Activated CD8-positive, alpha-beta T cell treated with anti-CD3 and anti-CD28 coated beads, Interleukin-2, amount 10 ng/mL, durations not matched to agents 7 days and 5 days (primary cell): ENCODE measurements at regions of chr7 and their contacts with region 1.

Region 1: DNA sequence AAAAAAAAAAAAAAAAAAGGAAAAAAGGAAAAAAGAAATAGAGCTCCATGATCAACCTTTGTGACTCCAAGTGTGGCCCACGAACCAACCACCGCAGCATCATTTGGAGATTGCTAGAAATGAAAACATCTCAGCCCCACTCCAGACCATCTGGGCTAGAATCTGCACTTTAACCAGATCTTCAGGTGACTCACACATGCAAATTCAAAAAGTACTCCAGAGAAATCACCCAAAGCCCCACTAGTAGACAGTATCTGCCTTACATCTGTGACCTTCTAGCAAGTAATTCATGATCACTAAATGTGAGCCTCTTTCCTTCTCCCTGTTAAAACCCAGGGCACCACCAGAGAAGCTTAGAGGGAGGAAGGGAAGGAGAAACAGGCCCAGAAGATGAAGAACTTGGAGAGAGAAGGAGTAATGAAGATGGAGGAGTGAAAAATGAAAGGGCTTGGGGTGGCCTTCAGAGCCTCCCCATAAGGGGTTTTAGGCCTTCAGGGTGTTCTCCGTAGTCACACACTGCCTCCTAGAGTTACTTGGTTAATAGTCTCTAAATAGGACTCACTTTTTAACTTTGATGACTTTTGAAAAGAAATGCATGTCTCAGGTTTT is 94.0 kb downstream of the SLC37A3 start:
- DNase-seq: peak; percentile 62
- ATAC-seq: peak; percentile 93
- H3K4me3 Mint-ChIP-seq: no peak overlapping the region
- H3K27ac Mint-ChIP-seq: peak overlapping the region; percentile 47
- H3K4me1 Mint-ChIP-seq: peaks cover 4% of the 10 kb centered on the region
- H3K27me3 Mint-ChIP-seq: peaks cover 1% of the 10 kb centered on the region

Region 2: GRCh38 chr7:140175221-140176121 is 128.8 kb before region 1 on chr7:
- CTCF ChIA-PET with region 1: interaction called, 11 read pairs
- POLR2A ChIA-PET with region 1: interaction called, 7 read pairs
- DNase-seq: peak; percentile 93
- ATAC-seq: peak; percentile 57
- H3K4me3 Mint-ChIP-seq: peak overlapping the region; percentile 82
- H3K27ac Mint-ChIP-seq: peak overlapping the region; percentile 87
- H3K4me1 Mint-ChIP-seq: peaks cover 22% of the 10 kb centered on the region
- H3K27me3 Mint-ChIP-seq: peaks cover 21% of the 10 kb centered on the region

Region 3: GRCh38 chr7:140230861-140231770 is 73.2 kb before region 1 on chr7:
- CTCF ChIA-PET with region 1: interaction called, 11 read pairs
- POLR2A ChIA-PET with region 1: no interaction called
- DNase-seq: peak; percentile 66
- ATAC-seq: peak; percentile 47
- H3K4me3 Mint-ChIP-seq: peak overlapping the region; percentile 85
- H3K27ac Mint-ChIP-seq: peak overlapping the region; percentile 89
- H3K4me1 Mint-ChIP-seq: peaks cover 37% of the 10 kb centered on the region
- H3K27me3 Mint-ChIP-seq: peaks cover 2% of the 10 kb centered on the region

Region 4: DNA sequence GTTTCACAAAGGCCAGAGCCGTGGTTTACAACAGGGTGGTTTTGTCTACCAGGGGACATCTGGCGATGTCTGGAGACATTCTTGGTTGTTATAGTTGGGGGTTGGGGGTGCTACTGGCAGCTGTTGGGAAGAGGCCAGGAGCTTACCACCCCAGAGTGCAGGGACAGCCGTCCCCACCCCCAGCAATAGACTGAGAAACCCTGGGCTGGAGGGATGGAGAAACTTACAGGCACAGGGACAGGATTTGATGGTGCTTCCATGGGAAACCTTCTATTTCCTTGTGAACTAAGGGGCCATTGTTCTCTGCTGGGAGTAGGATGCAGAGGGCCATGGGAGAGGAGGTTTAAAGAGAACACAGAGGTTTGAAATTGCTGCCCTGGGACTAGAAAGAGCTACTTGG is 379.4 kb after region 1 on chr7:
- CTCF ChIA-PET with region 1: no interaction called
- POLR2A ChIA-PET with region 1: no interaction called
- DNase-seq: no peak
- ATAC-seq: no peak
- H3K4me3 Mint-ChIP-seq: no peak overlapping the region
- H3K27ac Mint-ChIP-seq: no peak overlapping the region
- H3K4me1 Mint-ChIP-seq: no peaks in the 10 kb centered on the region
- H3K27me3 Mint-ChIP-seq: no peaks in the 10 kb centered on the region